ENCODE measurements at regions of chr13 and their contacts with region 1.

Region 1: DNA sequence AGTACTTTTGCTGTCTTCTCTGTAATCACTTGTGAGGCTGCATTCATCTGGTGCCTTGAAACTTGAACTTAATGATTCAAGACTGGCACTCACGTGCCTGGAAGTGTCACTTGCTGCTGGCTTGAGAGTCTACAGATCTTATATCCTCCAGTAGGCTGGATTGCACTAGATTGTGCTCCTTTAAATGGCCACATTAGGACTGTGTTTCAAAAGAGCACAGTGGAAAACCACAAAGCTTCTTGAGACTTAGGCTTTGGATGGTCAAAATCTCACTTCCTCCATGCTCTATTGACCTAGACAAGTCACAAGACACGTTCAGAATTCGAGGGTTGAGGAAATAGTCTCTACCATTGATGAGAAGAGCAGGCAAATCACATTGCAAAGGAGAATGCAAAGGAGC is 1278.8 kb upstream of the MIR17HG start:
- DNase-seq: no peak
- ATAC-seq: no peak
- H3K4me3 ChIP-seq: no peak overlapping the region
- H3K27ac ChIP-seq: no peak overlapping the region
- H3K4me1 ChIP-seq: no peaks in the 10 kb centered on the region
- H3K27me3 ChIP-seq: no peaks in the 10 kb centered on the region
- CTCF ChIP-seq: no peak

Region 2: GRCh38 chr13:90118467-90119071 is 49.9 kb after region 1 on chr13:
- intact Hi-C with region 1: loop called in 1 of 10 experiments (anchors 1 kb)
- DNase-seq: no peak
- ATAC-seq: no peak
- H3K4me3 ChIP-seq: no peak overlapping the region
- H3K27ac ChIP-seq: no peak overlapping the region
- H3K4me1 ChIP-seq: peaks cover 0 to 6% (median 0%) of the 10 kb centered on the region in 9 donors
- H3K27me3 ChIP-seq: no peaks in the 10 kb centered on the region
- CTCF ChIP-seq: no peak

Region 3: DNA sequence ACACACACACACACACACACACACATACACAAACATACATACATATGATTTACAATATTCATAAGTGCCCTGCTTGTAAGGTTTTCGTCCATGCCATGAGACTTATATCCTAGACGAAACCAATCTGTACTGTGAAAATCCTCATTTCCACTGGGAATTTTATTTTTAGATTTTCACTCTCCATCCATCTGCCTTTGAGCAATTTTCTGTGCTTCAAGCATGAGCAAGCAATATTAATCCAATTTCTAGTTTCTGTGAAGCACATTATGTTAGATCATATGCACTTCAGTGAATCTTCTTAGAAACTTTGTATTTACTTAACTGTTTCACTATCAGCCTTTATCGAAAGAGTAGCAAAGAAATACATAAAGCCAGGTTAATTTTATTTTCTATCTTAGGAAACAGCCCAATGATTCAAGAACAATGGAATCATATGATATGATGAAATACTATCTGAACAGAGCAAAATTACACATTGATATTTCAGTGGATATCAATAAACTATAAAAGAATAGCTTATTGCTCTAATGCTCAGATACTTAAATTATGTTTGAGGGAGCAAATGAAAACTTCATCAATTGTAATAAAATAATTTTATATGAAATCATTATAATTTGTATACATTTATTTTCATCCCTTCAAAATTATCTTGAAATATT is 178.2 kb after region 1 on chr13:
- intact Hi-C with region 1: no loop called
- DNase-seq: no peak
- ATAC-seq: no peak
- H3K4me3 ChIP-seq: no peak overlapping the region
- H3K27ac ChIP-seq: no peak overlapping the region
- H3K4me1 ChIP-seq: no peaks in the 10 kb centered on the region
- H3K27me3 ChIP-seq: no peaks in the 10 kb centered on the region
- CTCF ChIP-seq: no peak

Measured in heart right ventricle (tissue), 16 donors.